Right ventricle myocardium inferior (tissue), 1 donor: ENCODE measurements at regions of chr11 and their contacts with region 1.

Region 1: GRCh38 chr11:73350908-73351636 is 25.1 kb upstream of the RELT start:
- DNase-seq: peak; percentile 68
- ATAC-seq: peak; percentile 53

Region 2: GRCh38 chr11:73393479-73394380 is 42.7 kb after region 1 on chr11:
- intact Hi-C with region 1: loop called (anchors 2 kb)
- DNase-seq: peak; percentile 84
- ATAC-seq: peak; percentile 64

Region 3: DNA sequence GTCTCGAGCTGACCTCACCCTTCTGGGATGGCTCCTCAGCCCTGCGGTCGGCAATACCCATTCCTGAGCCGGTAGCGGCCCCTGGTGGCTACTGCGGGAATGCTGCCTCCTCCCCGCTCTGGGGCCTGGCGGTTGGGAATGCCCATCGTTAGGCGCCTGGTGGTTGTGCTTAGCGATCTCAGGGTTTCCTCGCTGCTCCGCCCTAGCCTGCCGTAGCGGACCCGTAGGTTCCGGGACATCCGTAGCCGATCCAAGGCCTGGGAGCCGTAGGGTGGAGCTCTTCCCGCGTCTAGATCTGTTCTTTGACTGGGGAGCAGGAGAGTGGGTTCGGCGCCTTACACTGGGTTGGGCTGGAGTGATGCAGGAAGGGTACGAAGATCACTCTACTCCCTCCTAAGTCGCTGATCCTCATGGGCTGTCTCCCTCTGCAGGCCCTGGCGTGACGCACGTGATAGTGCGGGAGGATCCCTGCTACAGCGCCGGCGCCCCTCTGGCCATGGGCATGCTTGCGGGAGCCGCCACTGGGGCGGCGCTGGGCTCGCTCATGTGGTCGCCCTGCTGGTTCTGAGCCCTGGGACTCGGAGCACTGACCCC is 310.1 kb after region 1 on chr11:
- intact Hi-C with region 1: loop called (anchors 5 kb)
- DNase-seq: peak; percentile 94
- ATAC-seq: peak; percentile 96